WTC11 (cell line): ENCODE measurements at regions of chr14 and their contacts with region 1.

Region 1: DNA sequence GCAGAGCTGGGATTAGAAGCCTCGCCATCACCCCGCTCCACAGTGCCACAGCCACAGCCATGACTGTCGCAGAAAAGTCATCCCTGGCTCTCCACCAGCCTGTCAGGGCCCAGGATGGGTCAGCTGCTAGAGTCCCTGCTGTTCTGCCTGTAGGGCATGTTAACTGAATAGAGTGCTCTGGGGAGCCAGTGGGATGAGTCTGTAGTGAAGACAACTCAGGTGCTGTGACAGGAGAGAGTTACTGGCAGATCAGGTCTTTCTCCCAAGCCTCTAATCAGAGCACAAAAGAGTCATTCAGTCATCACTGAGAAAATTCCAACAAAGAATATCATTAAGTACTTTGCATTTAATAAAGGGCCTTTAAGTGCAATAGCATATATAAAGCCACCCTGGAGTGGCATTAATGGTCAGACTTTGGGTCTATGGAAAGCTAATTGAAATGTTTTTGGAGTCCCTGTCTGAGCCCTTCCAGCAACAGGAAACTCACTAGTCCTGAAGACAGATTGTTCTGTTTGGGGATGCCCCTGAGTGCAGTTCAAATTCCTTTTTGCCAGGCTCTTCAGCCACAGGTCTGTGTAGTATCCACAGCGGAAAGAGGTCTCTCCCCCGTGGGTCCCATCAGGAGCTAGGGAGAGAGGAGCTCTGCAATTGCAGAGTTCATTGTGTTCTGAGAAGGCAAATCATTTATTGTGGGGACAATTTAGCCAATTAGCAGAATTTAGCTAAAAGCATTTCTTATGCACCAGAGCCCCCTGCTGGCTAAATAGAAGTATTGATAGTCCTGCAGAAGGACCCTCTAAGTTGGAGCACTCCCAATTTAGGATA is 45.2 kb upstream of the C14orf132 start:
- DNase-seq: no peak
- ATAC-seq: peak; percentile 79
- H3K4me3 Mint-ChIP-seq: no peak overlapping the region
- H3K27ac Mint-ChIP-seq: peak overlapping the region; percentile 74; the same call in 1 of the 2 replicates
- H3K4me1 Mint-ChIP-seq: peaks cover 19% of the 10 kb centered on the region
- H3K27me3 Mint-ChIP-seq: peaks cover 9% of the 10 kb centered on the region
- CTCF ChIP-seq: peak; percentile 89

Region 2: DNA sequence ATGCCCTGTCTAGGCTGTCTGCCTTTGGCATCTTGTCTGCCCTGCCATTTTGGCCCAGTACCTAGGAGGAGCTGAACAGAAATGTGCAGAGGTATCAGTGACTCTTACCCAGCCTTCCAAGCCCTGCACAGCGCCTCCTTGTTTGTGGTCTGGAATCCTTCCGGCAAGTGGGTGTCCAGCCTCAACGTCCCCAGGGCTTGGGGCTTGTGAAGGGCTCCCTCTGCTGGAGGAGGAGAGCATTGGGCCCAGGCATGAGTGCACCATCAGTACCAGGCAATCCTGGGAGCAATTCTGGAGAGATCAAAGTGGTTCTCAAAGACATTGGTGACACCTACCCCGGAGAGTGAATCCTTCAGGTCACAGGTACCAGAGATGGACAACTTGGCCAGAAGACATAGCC is 310.2 kb before region 1 on chr14:
- CTCF ChIA-PET with region 1: interaction called, 16 read pairs
- POLR2A ChIA-PET with region 1: no interaction called
- DNase-seq: peak; percentile 75
- ATAC-seq: peak; percentile 83
- H3K4me3 Mint-ChIP-seq: no peak overlapping the region
- H3K27ac Mint-ChIP-seq: no peak overlapping the region
- H3K4me1 Mint-ChIP-seq: peaks cover 35% of the 10 kb centered on the region
- H3K27me3 Mint-ChIP-seq: peaks cover 12% of the 10 kb centered on the region
- CTCF ChIP-seq: peak; percentile 67; the same call in 1 of the 2 replicates

Region 3: GRCh38 chr14:95774265-95775160 is 219.5 kb before region 1 on chr14:
- CTCF ChIA-PET with region 1: interaction called, 21 read pairs
- POLR2A ChIA-PET with region 1: no interaction called
- DNase-seq: peak; percentile 76
- ATAC-seq: peak; percentile 51
- H3K4me3 Mint-ChIP-seq: no peak overlapping the region
- H3K27ac Mint-ChIP-seq: no peak overlapping the region
- H3K4me1 Mint-ChIP-seq: peaks cover 10% of the 10 kb centered on the region
- H3K27me3 Mint-ChIP-seq: peaks cover 32% of the 10 kb centered on the region
- CTCF ChIP-seq: peak; percentile 97

Region 4: GRCh38 chr14:95838862-95839261 is 155.1 kb before region 1 on chr14:
- CTCF ChIA-PET with region 1: no interaction called
- POLR2A ChIA-PET with region 1: no interaction called
- DNase-seq: no peak
- ATAC-seq: no peak
- H3K4me3 Mint-ChIP-seq: no peak overlapping the region
- H3K27ac Mint-ChIP-seq: no peak overlapping the region
- H3K4me1 Mint-ChIP-seq: peaks cover 20% of the 10 kb centered on the region
- H3K27me3 Mint-ChIP-seq: peaks cover 2% of the 10 kb centered on the region; the same call in 1 of the 2 replicates
- CTCF ChIP-seq: no peak

Region 5: GRCh38 chr14:95876761-95877538 is 117.0 kb before region 1 on chr14 and contains the start of gene TUNAR:
- CTCF ChIA-PET with region 1: interaction called, 42 read pairs
- POLR2A ChIA-PET with region 1: no interaction called
- DNase-seq: peak; percentile 72
- ATAC-seq: peak; percentile 49
- H3K4me3 Mint-ChIP-seq: peak within 1 kb of the TSS; percentile 76
- H3K27ac Mint-ChIP-seq: peak within 1 kb of the TSS; percentile 15; the same call in 1 of the 2 replicates
- H3K4me1 Mint-ChIP-seq: peaks cover 61% of the 10 kb centered on the region
- H3K27me3 Mint-ChIP-seq: peaks cover 14% of the 10 kb centered on the region
- CTCF ChIP-seq: no peak
- total RNA-seq, gene TUNAR: 36.3 to 57.6 TPM (median 57.0 TPM) in 3 replicates

Region 6: DNA sequence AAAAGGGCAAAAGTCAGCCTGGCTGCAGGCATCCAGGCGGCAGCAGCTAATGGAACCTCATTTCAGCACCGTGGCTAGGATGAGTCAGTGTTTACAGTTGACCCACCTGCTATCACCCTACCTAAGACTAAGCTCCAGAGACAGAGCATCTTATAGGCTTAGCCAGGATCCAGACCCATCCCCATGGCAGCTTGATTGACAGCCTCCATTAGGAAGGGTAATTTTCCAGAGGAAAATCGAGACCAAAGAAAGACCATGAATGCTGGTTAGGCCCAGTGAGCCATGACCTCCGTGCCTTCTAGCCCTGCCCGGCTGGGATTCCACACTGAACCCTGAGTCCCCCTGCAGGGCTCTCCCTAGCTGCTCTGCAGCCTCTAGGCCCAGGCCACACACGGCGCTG is 78.7 kb before region 1 on chr14:
- CTCF ChIA-PET with region 1: interaction called, 11 read pairs
- POLR2A ChIA-PET with region 1: no interaction called
- DNase-seq: peak; percentile 53
- ATAC-seq: peak; percentile 95
- H3K4me3 Mint-ChIP-seq: no peak overlapping the region
- H3K27ac Mint-ChIP-seq: peak overlapping the region; percentile 85
- H3K4me1 Mint-ChIP-seq: peaks cover 44% of the 10 kb centered on the region
- H3K27me3 Mint-ChIP-seq: no peaks in the 10 kb centered on the region
- CTCF ChIP-seq: no peak

Region 7: GRCh38 chr14:95979339-95980042 is 14.5 kb before region 1 on chr14:
- CTCF ChIA-PET with region 1: interaction called, 30 read pairs
- POLR2A ChIA-PET with region 1: no interaction called
- DNase-seq: peak; percentile 52
- ATAC-seq: peak; percentile 87
- H3K4me3 Mint-ChIP-seq: peak overlapping the region; percentile 24; the same call in 1 of the 2 replicates
- H3K27ac Mint-ChIP-seq: no peak overlapping the region; the same call in 1 of the 2 replicates
- H3K4me1 Mint-ChIP-seq: peaks cover 27% of the 10 kb centered on the region
- H3K27me3 Mint-ChIP-seq: no peaks in the 10 kb centered on the region; the same call in none of the 2 replicates
- CTCF ChIP-seq: no peak

Region 8: GRCh38 chr14:96083667-96084320 is 89.8 kb after region 1 on chr14:
- CTCF ChIA-PET with region 1: no interaction called
- POLR2A ChIA-PET with region 1: no interaction called
- DNase-seq: no peak
- ATAC-seq: no peak
- H3K4me3 Mint-ChIP-seq: no peak overlapping the region
- H3K27ac Mint-ChIP-seq: no peak overlapping the region
- H3K4me1 Mint-ChIP-seq: peaks cover 6% of the 10 kb centered on the region; the same call in 1 of the 2 replicates
- H3K27me3 Mint-ChIP-seq: no peaks in the 10 kb centered on the region
- CTCF ChIP-seq: no peak